Prostate gland (tissue), 2 donors: ENCODE measurements at regions of chr16 and their contacts with region 1.

Region 1: GRCh38 chr16:31873556-31874365 is at the start of gene ZNF267:
- DNase-seq: peak; percentile 95
- H3K4me3 ChIP-seq: peak within 1 kb of the TSS; percentile 96 to 99
- H3K27ac ChIP-seq: peak within 1 kb of the TSS; percentile 84 to 85
- H3K4me1 ChIP-seq: no peaks in the 10 kb centered on the region
- H3K27me3 ChIP-seq: no peaks in the 10 kb centered on the region
- CTCF ChIP-seq: no peak
- POLR2A ChIP-seq: peak; percentile 88
- total RNA-seq, gene ZNF267: 6.9 to 21.4 TPM

Region 2: DNA sequence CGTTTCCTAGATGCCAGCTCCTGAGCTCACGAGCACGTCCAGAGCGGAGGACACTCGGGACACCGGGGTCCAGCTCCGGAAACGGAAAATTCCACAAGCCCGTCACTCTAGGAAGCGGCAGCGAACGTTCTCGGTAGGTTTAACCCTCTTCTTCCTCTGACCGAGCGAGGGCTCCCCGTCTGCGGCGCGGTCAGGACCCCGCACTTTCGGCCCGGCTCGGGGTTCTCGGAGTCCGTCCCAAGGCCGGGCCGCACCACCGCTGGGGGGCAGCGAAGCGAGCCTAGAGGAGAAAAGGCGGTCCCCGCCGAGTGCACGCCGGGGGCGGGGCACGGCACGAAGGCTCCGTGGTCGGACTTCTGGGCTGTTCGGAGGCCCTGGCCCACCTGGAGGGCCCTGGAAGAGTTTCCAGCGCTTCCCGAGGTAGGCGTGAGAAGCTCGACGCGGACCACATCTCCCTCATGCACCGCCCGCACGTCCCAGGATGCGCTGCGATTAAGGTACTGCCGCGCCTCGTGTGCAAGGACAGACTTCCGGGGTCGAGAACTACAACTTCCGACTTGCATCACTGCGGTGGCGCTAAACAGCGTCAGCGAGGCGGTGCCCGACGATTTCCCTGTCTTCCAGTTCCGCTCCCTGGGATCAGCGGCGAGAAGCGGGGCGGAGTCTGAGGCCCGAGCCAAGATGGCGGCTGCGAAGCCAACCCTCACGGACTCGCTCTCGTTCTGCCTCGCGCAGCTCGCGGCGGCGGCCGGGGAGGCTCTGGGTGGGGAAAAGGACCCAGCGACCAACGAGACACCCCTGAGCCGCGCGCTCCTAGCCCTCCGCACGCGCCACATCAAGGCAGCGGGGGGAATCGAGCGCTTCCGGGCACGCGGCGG is 414.7 kb before region 1 on chr16 and contains the start of gene ARMC5:
- intact Hi-C with region 1: loop called (anchors 5 kb)
- DNase-seq: peak; percentile 98
- H3K4me3 ChIP-seq: peak within 1 kb of the TSS; percentile 75 to 85
- H3K27ac ChIP-seq: peak within 1 kb of the TSS; percentile 98 to 99
- H3K4me1 ChIP-seq: peaks cover 20% of the 10 kb centered on the region
- H3K27me3 ChIP-seq: no peaks in the 10 kb centered on the region
- CTCF ChIP-seq: peak; percentile 35 to 72 (median 62)
- POLR2A ChIP-seq: no peak
- total RNA-seq, gene ARMC5: 10.0 to 20.3 TPM

Region 3: GRCh38 chr16:31507929-31508705 is 365.6 kb before region 1 on chr16 and contains the start of gene RUSF1:
- intact Hi-C with region 1: loop called (anchors 10 kb)
- DNase-seq: peak; percentile 91
- H3K4me3 ChIP-seq: peak within 1 kb of the TSS; percentile 89 to 92
- H3K27ac ChIP-seq: peak within 1 kb of the TSS; percentile 82 to 88
- H3K4me1 ChIP-seq: peaks cover 8% of the 10 kb centered on the region
- H3K27me3 ChIP-seq: no peaks in the 10 kb centered on the region
- CTCF ChIP-seq: peak in 2 of 4 experiments; percentile 6 to 28
- POLR2A ChIP-seq: peak; percentile 85
- total RNA-seq, gene RUSF1: 142 to 153 TPM

Region 4: DNA sequence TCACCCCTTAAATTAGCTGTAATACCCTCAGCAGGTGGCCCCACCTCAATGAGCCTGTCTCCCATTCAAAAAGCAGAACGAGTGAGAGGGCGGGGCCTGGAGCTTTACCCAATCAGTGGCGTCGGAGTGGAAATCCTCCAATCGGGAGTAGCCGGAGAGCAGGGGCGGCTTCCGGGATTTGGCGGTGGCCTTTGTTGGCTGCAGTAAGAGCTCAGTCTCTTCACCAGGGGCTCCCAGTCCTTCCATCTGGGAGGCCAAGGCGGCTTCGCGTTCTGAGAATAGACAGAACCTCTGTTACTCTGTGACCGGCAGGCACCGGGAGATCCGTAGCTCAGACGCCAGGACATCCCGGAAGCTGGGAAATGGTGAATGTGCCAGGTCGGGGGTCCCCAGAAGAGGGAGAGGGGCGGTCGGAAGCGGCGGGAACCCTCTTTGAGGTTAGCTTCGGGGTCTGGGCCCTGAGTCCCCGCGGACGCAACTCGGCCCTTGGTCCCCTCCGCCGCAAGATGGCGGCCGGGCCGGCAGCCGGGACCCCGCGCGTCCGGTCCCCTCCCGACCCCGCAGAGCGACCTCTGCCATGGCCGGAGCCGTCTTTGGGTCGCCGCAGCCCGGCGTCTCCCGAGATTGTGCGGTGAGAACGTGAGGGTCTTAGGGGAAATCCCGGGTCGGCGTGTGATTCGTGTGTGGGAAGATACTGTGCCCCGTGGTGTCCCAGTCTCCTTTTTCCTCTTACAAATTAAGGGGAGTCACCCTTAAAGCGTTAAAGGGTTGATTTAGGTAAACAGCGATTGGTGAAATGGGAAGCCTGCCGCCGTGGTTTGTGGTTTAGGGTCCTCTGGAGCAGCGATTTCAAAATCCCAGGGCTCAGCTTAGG is 160.5 kb before region 1 on chr16:
- intact Hi-C with region 1: loop called (anchors 10 kb)
- DNase-seq: peak; percentile 92
- H3K4me3 ChIP-seq: peak overlapping the region; percentile 72 to 85
- H3K27ac ChIP-seq: peak overlapping the region; percentile 83 to 89
- H3K4me1 ChIP-seq: no peaks in the 10 kb centered on the region
- H3K27me3 ChIP-seq: no peaks in the 10 kb centered on the region
- CTCF ChIP-seq: no peak
- POLR2A ChIP-seq: peak; percentile 78

Region 5: GRCh38 chr16:31810863-31811262 is 62.9 kb before region 1 on chr16:
- intact Hi-C with region 1: no loop called
- DNase-seq: no peak
- H3K4me3 ChIP-seq: no peak overlapping the region
- H3K27ac ChIP-seq: no peak overlapping the region
- H3K4me1 ChIP-seq: no peaks in the 10 kb centered on the region
- H3K27me3 ChIP-seq: no peaks in the 10 kb centered on the region
- CTCF ChIP-seq: no peak
- POLR2A ChIP-seq: no peak